ENCODE measurements at regions of chr5 and their contacts with region 1.

Region 1: GRCh38 chr5:36397901-36398536 is 96.3 kb upstream of the RANBP3L start:
- DNase-seq: peak; percentile 72
- H3K4me3 ChIP-seq: no peak overlapping the region
- H3K27ac ChIP-seq: no peak overlapping the region
- H3K4me1 ChIP-seq: peaks cover 24% of the 10 kb centered on the region
- H3K27me3 ChIP-seq: no peaks in the 10 kb centered on the region
- CTCF ChIP-seq: peak; percentile 61

Region 2: GRCh38 chr5:35963381-35963843 is 434.6 kb before region 1 on chr5:
- CTCF ChIA-PET with region 1: no interaction called
- POLR2A ChIA-PET with region 1: no interaction called
- intact Hi-C with region 1: loop called (anchors 10 kb)
- DNase-seq: peak; percentile 45
- H3K4me3 ChIP-seq: no peak overlapping the region
- H3K27ac ChIP-seq: no peak overlapping the region
- H3K4me1 ChIP-seq: no peaks in the 10 kb centered on the region
- H3K27me3 ChIP-seq: peaks cover 3% of the 10 kb centered on the region
- CTCF ChIP-seq: peak; percentile 71

Region 3: DNA sequence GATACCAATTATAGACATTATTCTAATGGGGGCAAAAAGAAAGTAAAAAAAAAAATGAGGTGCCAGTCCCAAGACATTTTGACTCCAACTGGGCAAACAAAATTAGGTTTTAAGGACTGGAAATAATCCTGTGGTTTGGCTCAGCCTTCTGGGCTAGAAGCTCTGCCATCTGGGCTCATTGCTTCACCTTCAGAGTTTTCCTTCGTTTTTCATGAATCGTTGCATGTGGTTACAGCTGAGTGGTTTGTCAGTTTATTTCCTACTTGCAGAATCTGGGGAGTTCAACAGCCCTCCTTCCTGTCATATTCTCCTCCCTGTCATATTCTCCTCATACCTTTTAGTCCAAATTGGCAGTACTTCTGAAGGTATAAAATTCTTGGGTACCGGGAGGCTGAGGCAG is 343.4 kb before region 1 on chr5:
- CTCF ChIA-PET with region 1: no interaction called
- POLR2A ChIA-PET with region 1: interaction called, 15 read pairs
- intact Hi-C with region 1: no loop called
- DNase-seq: no peak
- H3K4me3 ChIP-seq: no peak overlapping the region
- H3K27ac ChIP-seq: peak overlapping the region; percentile 40
- H3K4me1 ChIP-seq: peaks cover 47% of the 10 kb centered on the region
- H3K27me3 ChIP-seq: no peaks in the 10 kb centered on the region
- CTCF ChIP-seq: no peak